Activated CD8-positive, alpha-beta T cell treated with anti-CD3 and anti-CD28 coated beads for 36 hours (primary cell): ENCODE measurements at regions of chr11 and their contacts with region 1.

Region 1: GRCh38 chr11:67353317-67354074 is at the start of gene POLD4:
- DNase-seq: peak; percentile 98
- ATAC-seq: peak; percentile 90
- H3K4me3 Mint-ChIP-seq: peak within 1 kb of the TSS; percentile 83
- H3K27ac Mint-ChIP-seq: peak within 1 kb of the TSS; percentile 98
- H3K4me1 Mint-ChIP-seq: peaks cover 38% of the 10 kb centered on the region
- H3K27me3 Mint-ChIP-seq: peaks cover 3% of the 10 kb centered on the region
- CTCF ChIP-seq: no peak
- total RNA-seq, gene POLD4: 34.1 to 36.1 TPM

Region 2: GRCh38 chr11:67332081-67332691 is 21.3 kb before region 1 on chr11:
- CTCF ChIA-PET with region 1: interaction called, 40 read pairs
- POLR2A ChIA-PET with region 1: no interaction called
- intact Hi-C with region 1: no loop called
- DNase-seq: no peak
- ATAC-seq: no peak
- H3K4me3 Mint-ChIP-seq: no peak overlapping the region
- H3K27ac Mint-ChIP-seq: no peak overlapping the region
- H3K4me1 Mint-ChIP-seq: no peaks in the 10 kb centered on the region
- H3K27me3 Mint-ChIP-seq: no peaks in the 10 kb centered on the region
- CTCF ChIP-seq: no peak

Region 3: GRCh38 chr11:67366546-67366945 is 13.1 kb after region 1 on chr11:
- CTCF ChIA-PET with region 1: interaction called, 883 read pairs
- POLR2A ChIA-PET with region 1: interaction called, 13 read pairs
- intact Hi-C with region 1: no loop called
- DNase-seq: no peak
- ATAC-seq: no peak
- H3K4me3 Mint-ChIP-seq: no peak overlapping the region
- H3K27ac Mint-ChIP-seq: no peak overlapping the region
- H3K4me1 Mint-ChIP-seq: peaks cover 44% of the 10 kb centered on the region
- H3K27me3 Mint-ChIP-seq: peaks cover 8% of the 10 kb centered on the region
- CTCF ChIP-seq: no peak

Region 4: DNA sequence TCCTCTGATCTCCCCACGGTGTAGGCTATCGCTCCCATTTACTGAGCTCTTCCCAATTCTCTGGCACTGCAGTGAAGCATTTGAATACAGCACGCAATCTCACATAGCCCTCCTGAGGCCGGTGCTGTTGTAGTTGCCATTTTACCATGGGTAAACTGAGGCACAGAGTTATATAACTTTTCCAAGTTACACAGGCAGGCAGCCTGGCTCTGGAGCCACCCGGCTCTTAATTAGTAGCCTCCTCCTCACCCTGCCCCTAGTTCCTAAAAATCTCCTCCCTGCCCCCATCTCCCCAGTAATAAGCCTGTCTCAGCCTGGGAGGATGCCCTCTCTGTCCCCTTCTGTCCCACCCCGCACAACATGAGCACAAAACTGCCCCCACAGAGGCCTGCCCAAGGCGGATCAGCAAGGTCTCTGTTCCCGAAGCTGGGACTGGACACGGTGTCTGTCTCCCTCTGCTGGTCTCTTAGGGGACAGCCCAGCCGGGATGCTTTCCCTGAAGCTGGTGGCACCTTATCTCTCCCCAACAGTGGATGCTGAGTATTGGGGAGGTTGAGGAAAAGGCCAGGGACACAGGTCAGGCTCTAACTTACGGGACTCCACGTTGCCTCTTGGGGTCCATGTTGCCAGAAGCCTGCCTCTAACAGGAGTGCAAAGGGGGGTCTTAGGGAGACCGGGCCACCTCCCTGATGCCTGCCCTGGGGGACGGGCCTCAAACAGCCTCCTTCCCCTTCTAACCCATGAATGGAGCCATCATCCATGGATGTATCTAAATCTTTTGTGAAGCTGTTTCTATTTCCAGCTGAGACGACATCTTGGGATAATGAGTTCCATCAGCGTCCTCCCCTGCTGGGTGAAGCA is 29.0 kb after region 1 on chr11:
- CTCF ChIA-PET with region 1: interaction called, 883 read pairs
- POLR2A ChIA-PET with region 1: interaction called, 16 read pairs
- intact Hi-C with region 1: loop called (anchors 1 kb)
- DNase-seq: peak; percentile 90
- ATAC-seq: peak; percentile 95
- H3K4me3 Mint-ChIP-seq: no peak overlapping the region
- H3K27ac Mint-ChIP-seq: no peak overlapping the region
- H3K4me1 Mint-ChIP-seq: peaks cover 2% of the 10 kb centered on the region
- H3K27me3 Mint-ChIP-seq: no peaks in the 10 kb centered on the region
- CTCF ChIP-seq: peak; percentile 94

Region 5: DNA sequence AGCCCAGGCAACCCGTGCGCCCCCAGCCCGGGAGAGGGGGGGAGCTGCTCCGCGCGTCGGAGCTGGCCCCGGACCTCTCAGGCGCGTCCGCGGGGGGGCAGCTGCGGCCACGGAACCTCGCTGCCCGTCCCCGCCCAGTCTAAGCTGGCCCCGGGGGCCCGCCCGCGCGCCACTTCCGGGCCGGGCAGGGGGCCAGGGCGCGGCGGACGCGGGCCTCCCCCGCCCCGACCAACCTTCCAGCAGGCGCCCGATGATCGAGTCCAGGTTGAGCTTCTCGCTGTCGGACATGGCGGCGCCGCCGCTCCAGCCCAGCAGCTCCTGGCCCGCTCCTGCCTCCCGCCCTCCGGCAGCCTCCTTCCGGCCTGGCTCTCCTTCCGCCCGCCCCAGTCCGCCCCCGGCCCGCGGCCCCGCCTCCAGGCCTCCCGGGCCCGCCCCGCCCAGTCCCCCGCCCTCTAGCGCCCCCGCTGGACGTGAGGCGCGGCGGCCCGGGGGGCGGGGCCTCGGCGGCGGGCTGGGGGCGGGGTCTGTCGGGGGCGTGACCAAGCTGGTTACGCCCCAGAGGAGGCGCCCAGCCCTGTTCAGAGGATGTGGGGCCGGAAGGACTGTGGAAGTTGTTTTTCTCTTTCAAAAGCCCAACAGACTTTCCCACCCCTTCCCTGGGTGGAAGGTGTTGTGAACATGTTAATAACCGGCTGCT is 48.1 kb after region 1 on chr11 and contains the start of gene PPP1CA:
- CTCF ChIA-PET with region 1: interaction called, 18 read pairs
- POLR2A ChIA-PET with region 1: interaction called, 6 read pairs
- intact Hi-C with region 1: no loop called
- DNase-seq: peak; percentile 91
- ATAC-seq: peak; percentile 73
- H3K4me3 Mint-ChIP-seq: peak within 1 kb of the TSS; percentile 87
- H3K27ac Mint-ChIP-seq: peak within 1 kb of the TSS; percentile 86
- H3K4me1 Mint-ChIP-seq: peaks cover 40% of the 10 kb centered on the region
- H3K27me3 Mint-ChIP-seq: no peaks in the 10 kb centered on the region
- CTCF ChIP-seq: peak; percentile 46
- total RNA-seq, gene PPP1CA: 249 to 258 TPM

Region 6: GRCh38 chr11:67428052-67428914 is 74.8 kb after region 1 on chr11 and contains the start of gene RPS6KB2:
- CTCF ChIA-PET with region 1: no interaction called
- POLR2A ChIA-PET with region 1: no interaction called
- intact Hi-C with region 1: no loop called
- DNase-seq: peak; percentile 100
- ATAC-seq: peak; percentile 81
- H3K4me3 Mint-ChIP-seq: peak within 1 kb of the TSS; percentile 94
- H3K27ac Mint-ChIP-seq: peak within 1 kb of the TSS; percentile 96
- H3K4me1 Mint-ChIP-seq: peaks cover 22% of the 10 kb centered on the region
- H3K27me3 Mint-ChIP-seq: no peaks in the 10 kb centered on the region
- CTCF ChIP-seq: no peak
- total RNA-seq, gene RPS6KB2: 54.8 to 57.4 TPM